ENCODE measurements at regions of chr7 and their contacts with region 1.

Region 1: GRCh38 chr7:28096713-28097112 is 83.9 kb downstream of the JAZF1 start:
- DNase-seq: peak; percentile 71
- H3K4me3 ChIP-seq: no peak overlapping the region
- H3K27ac ChIP-seq: no peak overlapping the region
- H3K4me1 ChIP-seq: no peaks in the 10 kb centered on the region
- H3K27me3 ChIP-seq: no peaks in the 10 kb centered on the region
- CTCF ChIP-seq: peak; percentile 71 to 77
- POLR2A ChIP-seq: no peak

Region 2: DNA sequence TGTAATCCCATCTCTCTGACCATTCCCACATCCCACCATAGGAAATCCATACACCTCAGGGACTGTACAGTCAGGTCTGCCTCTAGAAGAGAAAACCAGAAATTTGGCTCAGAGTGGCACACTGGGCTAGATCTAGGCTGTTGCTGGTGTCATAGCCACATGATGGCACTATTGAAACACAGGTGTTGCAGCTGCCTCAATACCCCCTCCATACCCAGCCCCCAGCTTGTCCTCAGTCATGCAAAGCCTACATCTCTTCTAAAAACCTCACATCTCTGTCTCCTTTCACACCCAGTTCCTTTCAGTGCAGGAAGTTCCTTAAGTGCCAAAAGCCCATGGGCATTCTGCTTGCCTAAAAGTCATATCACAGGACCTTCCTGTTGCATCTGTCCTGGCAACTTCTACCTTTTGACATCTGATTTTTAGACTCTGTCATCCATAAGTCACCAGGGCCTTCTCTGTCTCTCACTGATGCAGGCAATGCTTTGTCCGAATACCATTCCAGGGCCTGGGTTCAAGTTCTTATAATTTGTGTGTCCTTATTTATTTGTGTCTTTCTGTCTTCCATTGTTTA is 407.0 kb before region 1 on chr7:
- CTCF ChIA-PET with region 1: interaction called, 5 read pairs
- POLR2A ChIA-PET with region 1: no interaction called
- dilution Hi-C with region 1: no loop called
- intact Hi-C with region 1: loop called (anchors 5 kb)
- DNase-seq: peak; percentile 69
- H3K4me3 ChIP-seq: no peak overlapping the region
- H3K27ac ChIP-seq: no peak overlapping the region
- H3K4me1 ChIP-seq: peaks cover 10% of the 10 kb centered on the region
- H3K27me3 ChIP-seq: no peaks in the 10 kb centered on the region
- CTCF ChIP-seq: peak; percentile 42 to 72
- POLR2A ChIP-seq: no peak

Region 3: DNA sequence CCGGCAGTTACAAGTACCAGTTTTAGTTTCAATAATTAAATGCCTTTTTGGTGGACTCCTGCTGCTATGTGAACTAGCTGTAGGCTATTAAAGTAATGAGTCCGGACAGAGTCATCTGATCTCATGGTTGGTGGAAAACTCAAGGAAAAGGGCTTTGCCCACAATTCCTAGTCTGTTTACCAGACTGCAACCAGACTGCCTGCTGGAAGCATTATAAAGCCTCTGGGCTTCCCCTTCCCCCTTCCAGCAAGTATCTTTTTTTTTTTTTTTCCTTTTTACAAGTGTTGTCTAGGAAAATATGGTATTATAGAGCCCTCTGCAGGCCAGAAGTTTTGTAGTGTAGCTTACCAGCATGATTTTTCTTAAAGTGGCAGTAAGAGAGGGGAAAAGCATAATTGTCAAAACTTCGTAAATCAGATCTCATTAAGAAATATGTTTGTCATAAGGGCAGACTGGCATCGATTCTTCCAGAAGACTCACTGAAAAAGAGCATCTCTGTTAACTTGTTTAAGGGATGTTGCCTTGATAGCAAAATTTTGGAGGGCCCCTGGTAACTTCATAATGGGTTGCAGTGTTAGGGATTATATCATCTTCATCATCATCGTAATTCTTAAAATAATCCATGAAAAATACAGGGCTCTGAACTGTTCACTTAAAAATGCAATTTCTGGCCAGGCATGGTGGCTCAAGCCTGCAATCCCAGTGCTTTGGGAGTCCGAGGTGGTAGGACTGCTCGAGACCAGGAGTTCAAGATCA is 175.5 kb before region 1 on chr7:
- CTCF ChIA-PET with region 1: interaction called, 11 read pairs
- POLR2A ChIA-PET with region 1: no interaction called
- dilution Hi-C with region 1: no loop called
- intact Hi-C with region 1: loop called (anchors 5 kb)
- DNase-seq: peak; percentile 94
- H3K4me3 ChIP-seq: no peak overlapping the region
- H3K27ac ChIP-seq: no peak overlapping the region
- H3K4me1 ChIP-seq: peaks cover 37% of the 10 kb centered on the region
- H3K27me3 ChIP-seq: no peaks in the 10 kb centered on the region
- CTCF ChIP-seq: peak; percentile 42 to 45
- POLR2A ChIP-seq: no peak

Region 4: DNA sequence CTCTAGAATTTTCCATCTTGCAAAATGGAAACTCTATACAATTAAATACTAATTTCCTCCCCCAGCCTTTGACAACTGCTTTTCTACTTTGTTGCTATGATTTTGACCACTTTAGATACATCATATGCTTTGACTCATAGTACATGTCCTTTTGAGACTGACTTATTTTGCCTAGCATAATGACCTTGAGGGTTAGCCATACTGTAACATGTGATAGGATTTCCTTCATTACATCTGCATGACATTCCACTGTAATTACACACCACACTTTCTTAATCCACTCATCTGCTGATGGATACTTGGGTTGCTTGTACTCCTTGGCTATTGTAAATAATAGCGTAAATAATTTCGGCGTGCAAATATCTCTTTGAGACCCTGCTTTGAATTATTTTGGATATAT is 43.8 kb before region 1 on chr7:
- CTCF ChIA-PET with region 1: interaction called, 16 read pairs
- POLR2A ChIA-PET with region 1: no interaction called
- dilution Hi-C with region 1: no loop called
- intact Hi-C with region 1: no loop called
- DNase-seq: peak; percentile 82
- H3K4me3 ChIP-seq: no peak overlapping the region
- H3K27ac ChIP-seq: peak overlapping the region; percentile 16
- H3K4me1 ChIP-seq: peaks cover 18% of the 10 kb centered on the region
- H3K27me3 ChIP-seq: no peaks in the 10 kb centered on the region
- CTCF ChIP-seq: no peak
- POLR2A ChIP-seq: no peak

Region 5: GRCh38 chr7:28078036-28078901 is 18.4 kb before region 1 on chr7:
- CTCF ChIA-PET with region 1: interaction called, 48 read pairs
- POLR2A ChIA-PET with region 1: no interaction called
- dilution Hi-C with region 1: no loop called
- intact Hi-C with region 1: no loop called
- DNase-seq: peak; percentile 49
- H3K4me3 ChIP-seq: no peak overlapping the region
- H3K27ac ChIP-seq: no peak overlapping the region
- H3K4me1 ChIP-seq: peaks cover 7% of the 10 kb centered on the region
- H3K27me3 ChIP-seq: no peaks in the 10 kb centered on the region
- CTCF ChIP-seq: peak; percentile 90 to 98
- POLR2A ChIP-seq: no peak

Region 6: DNA sequence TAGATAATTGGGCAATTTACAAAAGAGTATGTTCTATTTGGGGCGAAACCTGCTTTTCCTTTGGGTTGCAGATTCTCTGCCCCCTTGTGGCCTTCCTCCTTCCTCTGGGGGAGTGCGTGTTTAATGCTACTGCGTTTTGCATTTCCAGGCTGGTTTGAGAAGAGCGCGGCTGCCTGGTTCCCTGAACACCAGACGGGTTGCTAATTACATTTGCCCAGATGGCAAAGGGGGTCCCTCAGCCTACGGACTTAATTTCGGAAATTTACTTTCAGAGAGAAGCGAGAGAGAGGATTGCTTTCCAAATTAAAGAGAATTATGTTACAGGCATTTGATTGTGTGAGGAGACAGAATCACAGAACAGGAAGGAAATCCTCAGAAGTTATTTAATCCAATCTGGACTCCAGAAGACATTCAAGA is 175.8 kb after region 1 on chr7:
- CTCF ChIA-PET with region 1: no interaction called
- POLR2A ChIA-PET with region 1: no interaction called
- dilution Hi-C with region 1: no loop called
- intact Hi-C with region 1: loop called (anchors 1 kb)
- DNase-seq: peak; percentile 51
- H3K4me3 ChIP-seq: no peak overlapping the region
- H3K27ac ChIP-seq: no peak overlapping the region
- H3K4me1 ChIP-seq: no peaks in the 10 kb centered on the region
- H3K27me3 ChIP-seq: peaks cover 3 to 6% of the 10 kb centered on the region in 2 experiments
- CTCF ChIP-seq: peak; percentile 46 to 54
- POLR2A ChIP-seq: no peak